ENCODE measurements at regions of chr5 and their contacts with region 1.

Region 1: DNA sequence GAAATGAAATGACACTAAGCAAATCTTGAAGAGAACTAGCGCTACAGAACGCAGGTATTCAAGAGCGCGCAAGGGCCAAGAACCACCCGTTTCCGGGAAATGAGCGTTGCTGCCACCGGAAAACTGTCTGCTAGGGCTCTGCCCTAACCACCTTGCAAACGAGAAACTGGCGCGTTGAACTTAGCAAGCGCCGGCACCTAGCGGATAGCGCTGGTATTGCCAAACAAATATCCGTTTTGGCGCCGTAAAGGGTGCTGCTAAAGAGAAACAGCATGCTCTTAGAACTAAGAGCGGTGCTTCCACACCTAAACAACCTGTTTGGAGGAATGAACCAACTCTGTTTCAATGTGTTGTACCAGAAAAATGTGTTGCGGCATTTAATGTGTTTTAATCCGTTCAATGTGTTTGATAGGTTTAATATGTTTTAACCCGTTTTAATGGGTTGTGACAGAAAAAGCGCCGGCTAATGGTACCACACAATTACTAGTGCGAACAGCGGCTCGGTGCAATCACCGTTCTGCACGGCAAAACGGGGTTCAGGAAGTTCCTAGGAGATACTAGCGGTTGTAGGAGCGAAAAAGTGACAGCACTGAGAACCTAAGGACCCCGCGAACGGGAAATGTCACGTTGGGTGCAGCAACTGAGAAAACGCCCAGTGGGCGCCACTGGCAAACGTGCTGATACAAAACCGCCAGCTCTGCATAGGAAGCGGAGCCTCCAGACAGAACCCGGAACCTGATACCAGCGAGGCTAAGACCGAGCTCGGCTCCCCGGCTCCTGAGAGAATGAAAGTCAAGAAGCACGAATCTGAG is at the start of gene ANXA2R:
- DNase-seq: peak in 9 of 10 donors; percentile 64 to 85 (median 77)
- H3K4me3 ChIP-seq: peak within 1 kb of the TSS; percentile 7 to 83 (median 65)
- H3K27ac ChIP-seq: peak within 1 kb of the TSS; percentile 58 to 98 (median 96)
- H3K27me3 ChIP-seq: peaks cover 0 to 83% (median 64%) of the 10 kb centered on the region in 45 donors
- CTCF ChIP-seq: peak; percentile 41 to 87 (median 72)
- total RNA-seq, gene ANXA2R: 0.48 to 5.2 (median 1.9) TPM

Region 2: DNA sequence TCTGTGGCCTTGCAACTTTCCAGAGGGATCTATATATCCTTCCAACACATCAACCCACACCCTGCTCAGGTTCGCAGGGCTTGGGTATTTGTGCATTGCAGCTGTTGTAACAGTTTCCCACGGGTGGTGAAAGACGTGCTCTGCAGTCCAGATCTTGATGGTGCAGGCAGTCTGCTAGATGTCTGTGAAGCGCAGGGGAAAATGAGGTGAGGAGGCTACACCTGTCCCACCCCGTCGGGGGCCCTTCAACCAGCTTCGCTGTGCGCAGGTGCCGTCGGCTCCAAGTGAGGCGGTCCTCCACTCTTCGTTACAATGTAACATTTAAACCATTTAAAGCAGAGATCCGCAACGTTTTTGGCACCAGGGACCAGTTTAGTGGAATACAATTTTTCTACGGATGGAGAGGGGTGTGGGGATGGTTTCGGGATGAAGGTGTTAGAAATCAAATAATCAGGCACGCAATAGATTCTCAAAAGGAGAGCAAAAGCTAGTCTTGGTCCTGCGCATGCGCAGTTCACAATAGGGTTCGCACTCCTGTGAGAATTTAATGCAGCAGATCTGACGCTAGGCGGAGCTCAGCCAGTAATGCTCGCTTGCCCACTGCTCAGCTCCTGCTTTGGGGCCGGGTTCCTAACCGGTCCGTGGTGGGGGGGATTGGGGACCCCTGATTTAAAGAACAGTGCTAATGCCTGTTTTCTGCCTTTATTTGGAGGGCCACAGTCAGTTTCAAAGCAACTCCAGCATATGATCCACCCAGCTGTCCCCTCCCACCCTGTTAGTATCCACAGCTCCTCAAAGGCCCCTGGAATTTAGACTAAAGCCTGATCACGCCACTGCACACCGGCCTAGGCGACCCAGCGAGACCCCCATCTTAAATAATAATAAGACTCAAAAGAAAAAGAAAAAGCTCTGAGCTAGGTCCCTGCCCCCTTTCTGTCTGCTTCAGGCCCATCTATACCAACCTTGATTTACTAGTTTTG is 131.7 kb before region 1 on chr5:
- intact Hi-C with region 1: loop called (anchors 1 to 2 kb)
- DNase-seq: peak; percentile 71 to 91 (median 89)
- H3K4me3 ChIP-seq: peak overlapping the region; percentile 40 to 94 (median 65)
- H3K27ac ChIP-seq: peak overlapping the region in 10 of 59 donors; percentile 2 to 70 (median 27)
- H3K27me3 ChIP-seq: no peaks in the 10 kb centered on the region
- CTCF ChIP-seq: peak; percentile 58 to 94 (median 86)

Region 3: DNA sequence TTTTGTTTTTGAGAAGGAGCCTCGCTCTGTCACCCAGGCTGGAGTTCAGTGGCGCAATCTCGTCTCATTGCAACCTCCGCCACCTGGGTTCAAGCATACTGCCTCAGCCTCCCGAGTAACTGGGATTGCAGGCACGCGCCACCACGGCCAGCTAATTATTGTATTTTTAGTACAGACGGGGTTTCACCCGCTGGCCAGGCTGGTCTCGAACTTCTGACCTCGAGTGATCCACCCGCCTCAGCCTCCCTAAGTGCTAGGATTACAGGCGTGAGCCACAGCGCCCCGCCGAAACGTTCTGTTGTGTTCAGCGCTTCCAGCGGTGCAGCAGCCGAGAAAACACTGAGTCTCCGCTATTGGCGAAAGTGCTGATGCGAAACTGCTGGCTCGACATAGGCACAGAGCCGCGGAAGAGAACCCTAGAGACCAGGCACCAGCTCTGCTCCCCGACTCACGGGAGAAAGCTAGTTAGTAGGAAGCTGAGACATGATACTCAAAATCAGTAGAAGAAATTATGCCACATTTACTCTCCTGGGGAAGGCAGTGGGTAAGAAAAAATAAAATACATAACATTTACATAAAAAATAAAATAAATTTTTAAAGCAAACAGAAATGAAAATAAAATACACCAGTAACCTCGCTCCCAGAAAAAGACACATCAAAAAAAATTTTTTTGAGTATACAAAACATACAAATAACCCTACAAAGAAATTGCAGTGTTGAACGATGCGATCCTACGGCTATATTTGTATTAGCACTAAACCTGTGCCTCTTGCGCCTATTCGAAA is 31.9 kb before region 1 on chr5:
- intact Hi-C with region 1: loop called (anchors 2 to 5 kb)
- DNase-seq: peak; percentile 12 to 82 (median 72)
- H3K4me3 ChIP-seq: peak overlapping the region; percentile 15 to 76 (median 56)
- H3K27ac ChIP-seq: peak overlapping the region; percentile 45 to 97 (median 91)
- H3K27me3 ChIP-seq: peaks cover 0 to 78% (median 61%) of the 10 kb centered on the region in 45 donors
- CTCF ChIP-seq: peak in 17 of 56 donors; percentile 2 to 42 (median 24)

Region 4: DNA sequence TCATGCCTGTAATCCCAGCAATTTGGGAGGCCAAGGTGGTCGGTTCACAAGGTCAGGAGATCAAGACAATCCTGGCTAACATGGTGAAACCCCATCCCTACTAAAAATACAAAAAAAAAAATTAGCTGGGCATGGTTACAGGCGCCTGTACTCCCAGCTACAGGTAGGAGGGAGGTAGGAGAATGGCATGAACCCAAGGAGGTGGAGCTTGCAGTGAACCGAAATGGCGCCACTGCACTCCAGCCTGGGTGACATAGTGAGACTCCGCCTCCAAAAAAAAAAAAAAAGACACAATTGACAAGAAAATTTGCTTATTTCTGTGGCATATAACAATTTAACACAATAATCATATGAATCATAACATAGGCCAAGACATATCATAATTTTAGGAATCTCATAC is 45.0 kb after region 1 on chr5:
- intact Hi-C with region 1: no loop called
- DNase-seq: no peak
- H3K4me3 ChIP-seq: no peak overlapping the region
- H3K27ac ChIP-seq: no peak overlapping the region
- H3K27me3 ChIP-seq: no peaks in the 10 kb centered on the region
- CTCF ChIP-seq: no peak

Region 5: GRCh38 chr5:43120720-43121564 is 80.4 kb after region 1 on chr5 and contains the start of gene ZNF131:
- intact Hi-C with region 1: loop called in 1 of 2 experiments (anchors 5 kb)
- DNase-seq: peak; percentile 90 to 98 (median 95)
- H3K4me3 ChIP-seq: peak within 1 kb of the TSS; percentile 62 to 99 (median 91)
- H3K27ac ChIP-seq: peak within 1 kb of the TSS; percentile 77 to 100 (median 97)
- H3K27me3 ChIP-seq: no peaks in the 10 kb centered on the region
- CTCF ChIP-seq: peak in 9 of 56 donors; percentile 5 to 35 (median 21)
- total RNA-seq, gene ZNF131: 29.1 to 65.2 (median 49.2) TPM

Region 6: GRCh38 chr5:43336159-43336558 is 295.7 kb after region 1 on chr5:
- intact Hi-C with region 1: no loop called
- DNase-seq: no peak
- H3K4me3 ChIP-seq: no peak overlapping the region
- H3K27ac ChIP-seq: no peak overlapping the region
- H3K27me3 ChIP-seq: no peaks in the 10 kb centered on the region
- CTCF ChIP-seq: no peak

Measured in dorsolateral prefrontal cortex (tissue), 120 donors.